ENCODE measurements at regions of chr1 and their contacts with region 1.

Region 1: DNA sequence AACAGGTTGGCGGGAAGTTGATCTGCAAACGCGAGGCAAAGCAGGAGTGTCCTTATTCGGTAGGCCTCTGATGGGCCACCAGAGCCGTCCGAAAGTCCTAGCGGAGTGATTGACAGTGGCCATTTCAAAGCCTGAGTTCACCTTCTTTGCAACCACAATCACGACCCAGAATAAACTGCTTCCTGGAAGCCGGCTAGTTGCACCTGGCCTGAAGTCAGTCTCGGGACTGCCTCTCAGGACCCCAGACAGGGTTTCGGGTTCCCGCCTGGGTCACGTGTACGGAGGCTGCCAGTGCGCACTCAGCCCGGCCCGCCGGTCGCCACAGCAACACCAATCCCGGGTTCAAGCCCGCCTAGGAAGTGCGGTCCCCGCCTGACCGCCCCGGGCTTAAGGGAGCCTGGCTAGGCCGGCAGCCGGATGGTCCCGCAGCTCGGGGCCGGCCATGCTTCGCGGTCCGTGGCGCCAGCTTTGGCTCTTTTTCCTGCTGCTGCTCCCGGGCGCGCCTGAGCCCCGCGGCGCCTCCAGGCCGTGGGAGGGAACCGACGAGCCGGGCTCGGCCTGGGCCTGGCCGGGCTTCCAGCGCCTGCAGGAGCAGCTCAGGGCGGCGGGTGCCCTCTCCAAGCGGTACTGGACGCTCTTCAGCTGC is at the start of gene TOR3A:
- DNase-seq: peak; percentile 85
- H3K4me3 Mint-ChIP-seq: peak within 1 kb of the TSS; percentile 98
- H3K27ac Mint-ChIP-seq: peak within 1 kb of the TSS; percentile 92
- H3K4me1 Mint-ChIP-seq: peaks cover 30% of the 10 kb centered on the region
- H3K27me3 Mint-ChIP-seq: no peaks in the 10 kb centered on the region
- total RNA-seq, gene TOR3A: 35.8 to 39.2 TPM

Region 2: DNA sequence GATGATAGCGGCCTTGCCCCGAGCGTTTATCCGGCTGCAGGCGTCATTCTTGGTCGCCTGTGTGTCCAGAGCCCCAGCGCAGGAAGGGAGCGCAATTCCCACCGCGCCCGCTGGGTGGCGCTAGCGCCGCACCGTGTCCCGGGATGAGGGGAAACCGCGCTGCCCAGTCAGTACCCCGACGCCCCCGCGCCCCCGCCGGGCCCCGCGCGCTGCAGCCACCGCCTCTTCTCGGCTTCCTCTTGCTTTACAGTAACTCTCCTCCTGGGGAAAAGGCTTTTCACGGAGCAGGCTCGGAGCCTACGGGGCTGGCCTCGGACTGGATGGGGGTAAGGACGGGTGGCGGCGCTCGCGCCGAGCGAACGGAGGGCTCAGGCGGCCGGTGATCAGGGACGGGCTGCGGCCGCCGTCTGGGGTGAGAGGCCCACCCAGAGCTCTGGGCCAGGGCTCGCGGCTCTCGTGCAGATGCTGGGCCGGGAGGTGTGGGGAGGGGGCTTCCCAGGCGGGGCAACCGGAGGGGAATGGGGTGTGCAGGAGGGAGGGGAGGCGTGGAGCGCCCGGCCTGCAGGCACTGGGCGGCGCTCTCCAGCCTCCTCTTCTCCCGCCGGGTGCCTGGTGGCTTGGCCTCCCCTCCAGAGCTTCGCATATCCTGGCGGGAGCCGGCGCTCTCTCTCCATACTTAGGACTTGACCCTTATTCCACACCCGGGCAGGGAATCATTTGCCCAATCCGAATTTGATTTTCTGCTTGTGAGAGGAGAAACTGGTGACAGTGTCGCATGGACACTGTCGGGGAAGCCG is 539.1 kb before region 1 on chr1:
- CTCF ChIA-PET with region 1: no interaction called
- intact Hi-C with region 1: loop called (anchors 2 kb)
- DNase-seq: peak; percentile 92
- H3K4me3 Mint-ChIP-seq: peak overlapping the region; percentile 87
- H3K27ac Mint-ChIP-seq: peak overlapping the region; percentile 72
- H3K4me1 Mint-ChIP-seq: peaks cover 4% of the 10 kb centered on the region
- H3K27me3 Mint-ChIP-seq: no peaks in the 10 kb centered on the region

Region 3: GRCh38 chr1:178644308-178645120 is 437.3 kb before region 1 on chr1:
- CTCF ChIA-PET with region 1: no interaction called
- intact Hi-C with region 1: no loop called
- DNase-seq: no peak
- H3K4me3 Mint-ChIP-seq: no peak overlapping the region
- H3K27ac Mint-ChIP-seq: no peak overlapping the region
- H3K4me1 Mint-ChIP-seq: no peaks in the 10 kb centered on the region
- H3K27me3 Mint-ChIP-seq: peaks cover 5% of the 10 kb centered on the region

Region 4: DNA sequence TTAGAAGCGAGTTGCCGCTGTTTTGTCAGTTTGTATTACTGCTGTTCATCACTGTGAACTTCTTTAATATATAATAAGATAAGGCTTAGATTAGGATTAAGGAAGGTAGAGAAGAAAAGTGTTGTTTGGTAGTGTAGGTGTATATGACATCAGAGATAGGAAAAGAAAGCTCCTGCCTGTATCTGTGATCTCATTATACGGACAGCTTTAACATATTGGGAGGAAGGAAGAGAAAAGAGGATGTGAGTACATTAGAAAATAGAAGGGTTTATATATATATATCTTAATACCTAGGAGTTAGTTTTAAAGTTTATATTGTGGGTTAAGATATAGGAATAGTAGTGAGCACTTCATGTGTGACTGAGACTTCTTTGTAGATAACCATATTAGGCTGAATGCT is 285.8 kb before region 1 on chr1:
- CTCF ChIA-PET with region 1: no interaction called
- intact Hi-C with region 1: no loop called
- DNase-seq: no peak
- H3K4me3 Mint-ChIP-seq: no peak overlapping the region
- H3K27ac Mint-ChIP-seq: no peak overlapping the region
- H3K4me1 Mint-ChIP-seq: no peaks in the 10 kb centered on the region
- H3K27me3 Mint-ChIP-seq: no peaks in the 10 kb centered on the region

Region 5: DNA sequence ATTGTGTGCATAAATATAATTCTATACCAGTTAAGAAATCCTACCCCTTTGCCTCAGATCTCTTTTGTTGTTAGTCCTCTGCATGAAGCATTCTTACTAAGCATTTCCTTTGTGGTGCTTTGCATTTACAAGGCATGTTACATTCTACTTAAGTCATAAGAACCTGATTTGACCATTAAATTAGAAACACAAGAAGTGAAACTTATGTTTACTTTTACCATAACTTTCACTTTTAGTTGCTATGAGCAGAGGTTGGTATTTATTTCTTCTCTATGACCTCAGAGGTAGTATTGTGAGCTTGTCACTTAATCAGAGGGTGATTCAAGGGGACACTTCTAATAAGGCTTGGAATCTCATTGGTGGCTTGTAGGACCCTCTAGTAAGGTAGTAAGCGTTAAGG is 47.1 kb before region 1 on chr1:
- CTCF ChIA-PET with region 1: interaction called, 3 read pairs
- intact Hi-C with region 1: loop called (anchors 1 kb)
- DNase-seq: no peak
- H3K4me3 Mint-ChIP-seq: no peak overlapping the region
- H3K27ac Mint-ChIP-seq: peak overlapping the region; percentile 77
- H3K4me1 Mint-ChIP-seq: peaks cover 85% of the 10 kb centered on the region
- H3K27me3 Mint-ChIP-seq: no peaks in the 10 kb centered on the region

Region 6: GRCh38 chr1:179058487-179059483 is 23.0 kb before region 1 on chr1:
- CTCF ChIA-PET with region 1: no interaction called
- intact Hi-C with region 1: no loop called
- DNase-seq: no peak
- H3K4me3 Mint-ChIP-seq: no peak overlapping the region
- H3K27ac Mint-ChIP-seq: no peak overlapping the region
- H3K4me1 Mint-ChIP-seq: peaks cover 2% of the 10 kb centered on the region
- H3K27me3 Mint-ChIP-seq: no peaks in the 10 kb centered on the region

Region 7: DNA sequence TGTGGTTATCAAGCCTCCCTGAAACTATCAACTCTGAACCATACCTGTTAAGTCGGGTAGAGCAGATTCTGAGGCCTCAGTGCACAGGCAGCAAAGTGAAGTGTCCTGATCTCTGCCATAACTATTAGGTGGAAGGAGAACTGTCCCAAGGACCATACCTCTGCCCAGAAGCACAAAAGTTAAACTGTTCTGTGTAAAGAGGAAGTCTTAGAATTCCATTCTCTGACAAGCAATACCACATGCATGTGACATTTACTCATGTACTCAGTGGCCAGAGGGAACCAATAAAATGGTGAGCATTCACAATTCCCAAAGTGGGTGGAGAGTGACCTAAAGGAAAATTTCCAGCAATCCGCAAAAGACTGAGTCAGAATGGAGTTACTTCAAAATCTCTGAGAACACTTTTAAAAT is 61.1 kb after region 1 on chr1:
- CTCF ChIA-PET with region 1: no interaction called
- intact Hi-C with region 1: loop called (anchors 2 kb)
- DNase-seq: peak; percentile 30
- H3K4me3 Mint-ChIP-seq: peak overlapping the region; percentile 32
- H3K27ac Mint-ChIP-seq: peak overlapping the region; percentile 68
- H3K4me1 Mint-ChIP-seq: peaks cover 41% of the 10 kb centered on the region
- H3K27me3 Mint-ChIP-seq: no peaks in the 10 kb centered on the region

Region 8: GRCh38 chr1:179229214-179230140 is 147.7 kb after region 1 on chr1 and contains the start of gene ABL2:
- CTCF ChIA-PET with region 1: no interaction called
- intact Hi-C with region 1: loop called (anchors 1 kb)
- DNase-seq: peak; percentile 49
- H3K4me3 Mint-ChIP-seq: peak within 1 kb of the TSS; percentile 90
- H3K27ac Mint-ChIP-seq: peak within 1 kb of the TSS; percentile 85
- H3K4me1 Mint-ChIP-seq: peaks cover 31% of the 10 kb centered on the region
- H3K27me3 Mint-ChIP-seq: no peaks in the 10 kb centered on the region
- total RNA-seq, gene ABL2: 8.1 TPM

Region 9: GRCh38 chr1:179447489-179447888 is 365.7 kb after region 1 on chr1:
- CTCF ChIA-PET with region 1: no interaction called
- intact Hi-C with region 1: loop called (anchors 2 kb)
- DNase-seq: peak; percentile 15
- H3K4me3 Mint-ChIP-seq: no peak overlapping the region
- H3K27ac Mint-ChIP-seq: no peak overlapping the region
- H3K4me1 Mint-ChIP-seq: no peaks in the 10 kb centered on the region
- H3K27me3 Mint-ChIP-seq: peaks cover 13% of the 10 kb centered on the region

Region 10: DNA sequence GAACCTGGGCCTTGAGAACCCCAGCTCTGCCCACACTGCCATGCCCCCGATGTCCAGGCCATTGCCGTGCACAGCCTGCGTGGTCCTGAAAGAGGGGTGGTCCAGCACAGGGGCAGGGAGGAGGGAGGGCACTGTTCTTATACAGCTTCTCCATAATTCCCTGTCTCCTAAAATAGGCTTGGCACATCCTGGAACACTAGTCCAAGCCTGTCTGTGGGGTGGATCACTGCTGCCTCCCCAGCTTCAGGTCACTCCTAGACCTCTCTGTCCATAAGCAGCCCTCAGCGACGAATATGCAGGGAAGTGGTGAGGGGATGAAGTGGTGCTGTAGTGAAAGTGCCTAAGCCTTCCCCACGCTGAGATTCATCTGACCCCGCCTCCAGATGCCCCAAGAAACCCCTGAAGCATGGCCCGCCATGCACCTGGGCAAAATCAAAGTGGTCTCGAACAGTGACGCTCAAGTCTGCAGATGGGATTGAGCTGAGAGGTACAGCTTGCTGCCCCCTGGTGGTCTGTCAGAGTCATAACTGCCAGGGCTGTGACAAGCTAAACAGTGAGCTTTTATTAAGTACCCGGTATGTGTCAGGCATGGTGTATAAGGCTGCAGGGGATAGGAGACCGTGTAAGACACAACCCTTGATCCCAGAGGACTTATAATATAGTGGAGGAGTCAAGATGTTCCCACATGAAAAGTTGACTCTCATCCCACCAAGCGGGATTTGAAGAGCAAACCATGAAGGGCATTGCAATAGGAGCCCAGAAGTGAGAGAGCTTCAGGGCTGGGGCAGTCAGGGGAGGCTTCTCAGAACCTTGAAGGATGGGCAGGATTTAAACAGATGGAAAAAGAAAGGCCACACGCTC is 727.9 kb after region 1 on chr1:
- CTCF ChIA-PET with region 1: interaction called, 4 read pairs
- intact Hi-C with region 1: loop called (anchors 1 kb)
- DNase-seq: peak; percentile 81
- H3K4me3 Mint-ChIP-seq: no peak overlapping the region
- H3K27ac Mint-ChIP-seq: no peak overlapping the region
- H3K4me1 Mint-ChIP-seq: peaks cover 10% of the 10 kb centered on the region
- H3K27me3 Mint-ChIP-seq: no peaks in the 10 kb centered on the region

Measured in activated naive CD4-positive, alpha-beta T cell treated with anti-CD3 and anti-CD28 coated beads for 36 hours (primary cell).